Common myeloid progenitor, CD34-positive (primary cell): ENCODE measurements at regions of chr3 and their contacts with region 1.

Region 1: GRCh38 chr3:184469423-184469822 is 89.6 kb downstream of the CHRD start:
- DNase-seq: no peak
- H3K4me3 ChIP-seq: no peak overlapping the region
- H3K27ac ChIP-seq: no peak overlapping the region
- H3K4me1 ChIP-seq: peaks cover 6 to 67% (median 50%) of the 10 kb centered on the region in 4 experiments
- H3K27me3 ChIP-seq: no peaks in the 10 kb centered on the region

Region 2: DNA sequence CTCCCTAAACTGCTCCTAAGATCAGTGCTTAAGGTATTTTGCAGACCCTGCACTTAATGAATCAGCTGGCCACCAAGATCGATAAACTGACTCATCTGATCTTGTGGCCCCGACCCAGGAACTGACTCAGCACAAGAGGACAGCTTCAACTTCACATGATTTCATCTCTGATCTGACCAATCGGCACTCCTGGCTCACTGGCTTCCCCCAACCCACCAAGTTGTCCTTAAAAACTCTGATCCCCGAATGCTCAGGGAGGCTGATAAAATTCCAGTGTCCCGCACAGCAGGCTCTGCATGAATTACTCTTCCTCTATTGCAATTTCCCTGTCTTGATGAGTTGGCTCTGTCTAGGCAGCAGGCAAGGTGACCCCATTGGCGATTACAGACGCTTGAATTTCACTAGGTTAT is 359.1 kb before region 1 on chr3:
- CTCF ChIA-PET with region 1: no interaction called
- POLR2A ChIA-PET with region 1: no interaction called
- DNase-seq: no peak
- H3K4me3 ChIP-seq: no peak overlapping the region
- H3K27ac ChIP-seq: no peak overlapping the region
- H3K4me1 ChIP-seq: no peaks in the 10 kb centered on the region
- H3K27me3 ChIP-seq: no peaks in the 10 kb centered on the region

Region 3: GRCh38 chr3:184481984-184482671 is 12.7 kb after region 1 on chr3:
- CTCF ChIA-PET with region 1: interaction called, 31 read pairs
- POLR2A ChIA-PET with region 1: interaction called, 3 read pairs
- DNase-seq: peak in 1 of 3 donors; percentile 62
- H3K4me3 ChIP-seq: no peak overlapping the region
- H3K27ac ChIP-seq: no peak overlapping the region
- H3K4me1 ChIP-seq: peaks cover 0 to 15% (median 6%) of the 10 kb centered on the region in 4 experiments
- H3K27me3 ChIP-seq: no peaks in the 10 kb centered on the region